CD4-positive, alpha-beta memory T cell (primary cell): ENCODE measurements at regions of chr10 and their contacts with region 1.

Region 1: DNA sequence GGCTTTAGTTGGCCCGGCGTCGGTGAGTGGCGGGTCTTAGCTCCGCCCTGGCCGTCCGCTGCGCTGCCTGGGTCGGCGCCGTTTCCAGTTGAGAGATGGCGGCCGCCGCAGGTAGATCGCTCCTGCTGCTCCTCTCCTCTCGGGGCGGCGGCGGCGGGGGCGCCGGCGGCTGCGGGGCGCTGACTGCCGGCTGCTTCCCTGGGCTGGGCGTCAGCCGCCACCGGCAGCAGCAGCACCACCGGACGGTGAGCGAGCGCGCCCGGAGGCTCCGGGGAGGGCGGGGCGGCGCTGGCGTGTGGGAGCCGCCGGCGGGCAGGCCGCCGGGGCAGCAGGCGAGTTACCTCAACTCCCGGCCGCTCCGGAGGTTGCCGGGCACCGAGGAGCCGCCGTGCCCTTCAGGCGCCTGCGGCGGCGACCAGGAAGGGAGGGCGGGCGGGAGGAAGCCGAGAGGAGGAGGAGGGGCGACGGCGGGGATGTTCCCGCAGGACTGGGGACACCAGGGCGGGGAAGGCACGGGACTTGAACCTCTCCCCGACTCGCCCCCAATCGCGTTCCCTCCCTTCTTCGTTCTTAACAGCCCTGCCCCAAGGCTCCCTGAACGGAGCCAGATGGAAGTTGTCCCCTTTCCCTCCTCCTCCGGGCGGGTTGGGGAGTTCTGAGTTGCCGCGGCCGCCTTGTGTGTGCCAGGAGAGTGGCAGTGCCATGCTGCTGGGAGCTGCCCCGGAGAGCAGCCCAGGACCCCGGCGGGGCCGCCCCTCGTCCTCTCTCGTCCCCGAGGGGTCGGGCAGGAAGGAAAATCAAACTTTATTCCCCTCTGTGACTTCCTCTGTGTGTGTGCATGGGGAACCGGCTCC is at the start of gene MCU:
- DNase-seq: peak; percentile 91 to 95 (median 93)
- H3K4me3 ChIP-seq: peak within 1 kb of the TSS; percentile 49 to 69
- H3K4me3 Mint-ChIP-seq: peak within 1 kb of the TSS; percentile 86 to 93 (median 90)
- H3K27ac ChIP-seq: peak within 1 kb of the TSS; percentile 61
- H3K27ac Mint-ChIP-seq: peak within 1 kb of the TSS; percentile 78 to 90 (median 87)
- H3K4me1 ChIP-seq: peaks cover 25% of the 10 kb centered on the region
- H3K4me1 Mint-ChIP-seq: peaks cover 27 to 41% (median 32%) of the 10 kb centered on the region in 4 donors
- H3K27me3 ChIP-seq: no peaks in the 10 kb centered on the region
- H3K27me3 Mint-ChIP-seq: peaks cover 0 to 4% of the 10 kb centered on the region in 2 donors
- total RNA-seq, gene MCU: 12.1 to 16.4 TPM

Region 2: DNA sequence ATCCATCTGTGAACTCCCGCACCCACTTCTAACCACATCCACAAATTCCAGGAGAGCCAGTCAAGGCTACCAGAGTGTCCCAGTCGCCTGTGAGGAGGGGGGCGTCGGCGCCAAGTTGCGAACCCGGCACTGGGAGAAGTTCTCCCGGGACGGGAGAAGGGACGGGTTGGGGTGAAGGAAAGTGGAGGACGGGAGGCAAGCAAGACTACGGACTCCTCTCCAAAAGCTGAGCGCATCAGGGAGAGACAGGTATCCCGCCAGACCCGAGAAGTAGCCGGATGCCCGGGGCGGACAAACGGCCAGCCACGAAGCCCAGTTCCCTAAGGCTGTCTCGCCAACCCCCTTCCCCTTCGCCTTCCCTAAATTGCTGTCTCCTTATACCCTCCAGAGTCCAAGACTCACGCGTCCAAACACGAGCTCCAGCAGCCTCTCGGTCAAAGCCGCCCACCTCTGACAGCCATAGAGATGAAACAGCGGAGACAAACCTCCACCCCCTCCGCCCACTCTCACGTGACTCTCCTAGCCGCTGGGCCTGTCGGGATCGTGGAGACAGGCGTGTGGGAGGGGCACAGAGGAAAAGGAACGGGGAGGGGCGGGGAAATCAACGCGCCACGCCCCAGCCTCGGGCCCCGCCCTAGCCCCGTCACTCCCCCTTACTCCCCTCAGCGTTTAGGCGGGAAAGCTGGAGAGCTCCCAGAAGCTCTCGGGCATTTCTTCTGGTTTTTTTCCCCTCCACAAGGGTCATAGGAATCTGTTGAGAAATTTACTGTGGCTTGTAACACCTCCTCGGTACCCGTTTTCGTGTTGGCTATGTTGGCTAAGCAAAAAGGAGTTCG is 66.5 kb before region 1 on chr10 and contains the start of gene MICU1:
- CTCF ChIA-PET with region 1: no interaction called
- POLR2A ChIA-PET with region 1: interaction called, 15 read pairs
- intact Hi-C with region 1: loop called (anchors 1 kb)
- DNase-seq: peak; percentile 89 to 95 (median 90)
- H3K4me3 ChIP-seq: peak within 1 kb of the TSS; percentile 82 to 96
- H3K4me3 Mint-ChIP-seq: peak within 1 kb of the TSS; percentile 98 to 100 (median 99)
- H3K27ac ChIP-seq: peak within 1 kb of the TSS; percentile 63
- H3K27ac Mint-ChIP-seq: peak within 1 kb of the TSS; percentile 39 to 99 (median 98)
- H3K4me1 ChIP-seq: peaks cover 22% of the 10 kb centered on the region
- H3K4me1 Mint-ChIP-seq: peaks cover 10 to 22% (median 18%) of the 10 kb centered on the region in 4 donors
- H3K27me3 ChIP-seq: no peaks in the 10 kb centered on the region
- H3K27me3 Mint-ChIP-seq: no peaks in the 10 kb centered on the region
- total RNA-seq, gene MICU1: 24.9 to 28.4 TPM

Region 3: GRCh38 chr10:72649291-72649690 is 43.0 kb before region 1 on chr10:
- CTCF ChIA-PET with region 1: no interaction called
- POLR2A ChIA-PET with region 1: no interaction called
- intact Hi-C with region 1: no loop called
- DNase-seq: no peak
- H3K4me3 ChIP-seq: no peak overlapping the region
- H3K4me3 Mint-ChIP-seq: no peak overlapping the region
- H3K27ac ChIP-seq: no peak overlapping the region
- H3K27ac Mint-ChIP-seq: no peak overlapping the region
- H3K4me1 ChIP-seq: no peaks in the 10 kb centered on the region
- H3K4me1 Mint-ChIP-seq: no peaks in the 10 kb centered on the region
- H3K27me3 ChIP-seq: no peaks in the 10 kb centered on the region
- H3K27me3 Mint-ChIP-seq: peaks cover 1 to 6% of the 10 kb centered on the region in 2 donors

Region 4: GRCh38 chr10:72834183-72834825 is 142.0 kb after region 1 on chr10:
- CTCF ChIA-PET with region 1: interaction called, 25 read pairs
- POLR2A ChIA-PET with region 1: no interaction called
- intact Hi-C with region 1: loop called (anchors 2 kb)
- DNase-seq: peak; percentile 46 to 57 (median 55)
- H3K4me3 ChIP-seq: no peak overlapping the region
- H3K4me3 Mint-ChIP-seq: no peak overlapping the region
- H3K27ac ChIP-seq: no peak overlapping the region
- H3K27ac Mint-ChIP-seq: no peak overlapping the region
- H3K4me1 ChIP-seq: no peaks in the 10 kb centered on the region
- H3K4me1 Mint-ChIP-seq: peaks cover 1 to 6% (median 4%) of the 10 kb centered on the region in 4 donors
- H3K27me3 ChIP-seq: no peaks in the 10 kb centered on the region
- H3K27me3 Mint-ChIP-seq: no peaks in the 10 kb centered on the region